Tibial artery (tissue), 4 donors: ENCODE measurements at regions of chr12 and their contacts with region 1.

Region 1: GRCh38 chr12:48795480-48796455 is 6.9 kb upstream of the ADCY6 start:
- DNase-seq: peak; percentile 80 to 83
- H3K4me3 ChIP-seq: no peak overlapping the region
- H3K27ac ChIP-seq: no peak overlapping the region
- H3K4me1 ChIP-seq: peaks cover 0 to 7% (median 2%) of the 10 kb centered on the region in 4 donors
- H3K27me3 ChIP-seq: peaks cover 0 to 8% of the 10 kb centered on the region in 2 donors
- CTCF ChIP-seq: peak; percentile 91 to 98

Region 2: GRCh38 chr12:48631057-48631456 is 164.7 kb before region 1 on chr12:
- intact Hi-C with region 1: no loop called
- DNase-seq: no peak
- H3K4me3 ChIP-seq: no peak overlapping the region
- H3K27ac ChIP-seq: no peak overlapping the region
- H3K4me1 ChIP-seq: no peaks in the 10 kb centered on the region
- H3K27me3 ChIP-seq: peaks cover 0 to 6% of the 10 kb centered on the region in 2 donors
- CTCF ChIP-seq: no peak

Region 3: DNA sequence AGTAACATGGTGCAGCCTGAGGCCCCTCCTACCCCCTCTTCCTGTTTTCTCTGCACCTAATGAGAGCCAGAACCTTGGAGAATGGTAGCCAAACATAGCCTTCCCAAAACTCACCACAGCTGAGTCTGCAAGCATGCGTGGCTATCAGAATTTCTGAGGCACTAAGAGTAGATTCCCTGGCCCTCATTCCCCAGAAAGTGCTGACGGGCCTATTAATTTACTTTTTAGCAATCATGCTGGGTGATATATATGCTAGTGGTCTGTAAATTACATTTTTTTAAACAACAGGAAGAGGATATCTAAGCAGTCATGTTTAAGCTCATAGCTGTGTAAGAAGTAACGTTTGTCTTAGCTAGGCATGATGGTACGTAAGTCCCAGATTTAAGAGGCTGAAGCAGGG is 144.1 kb before region 1 on chr12:
- intact Hi-C with region 1: no loop called
- DNase-seq: no peak
- H3K4me3 ChIP-seq: no peak overlapping the region
- H3K27ac ChIP-seq: no peak overlapping the region
- H3K4me1 ChIP-seq: no peaks in the 10 kb centered on the region
- H3K27me3 ChIP-seq: no peaks in the 10 kb centered on the region
- CTCF ChIP-seq: no peak

Region 4: DNA sequence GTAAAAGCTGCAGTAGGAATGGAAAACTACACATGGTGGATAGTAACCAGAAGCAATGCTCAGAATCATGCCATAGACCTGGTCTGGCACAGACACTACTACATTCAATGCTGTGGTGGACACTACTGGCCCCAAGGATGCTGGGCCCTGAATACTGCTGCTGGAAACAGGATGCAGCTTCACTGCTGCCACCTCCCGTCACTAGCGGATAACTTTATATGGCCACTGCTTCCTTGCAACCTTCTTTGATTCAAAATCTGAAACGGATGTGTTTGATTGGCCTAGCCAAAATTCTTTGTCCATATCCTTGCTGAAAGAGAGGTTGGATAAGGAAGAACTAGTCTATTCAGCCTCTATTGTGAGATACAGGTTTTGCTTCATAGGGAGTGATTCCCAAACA is 37.5 kb before region 1 on chr12:
- intact Hi-C with region 1: loop called (anchors 2 kb)
- DNase-seq: no peak
- H3K4me3 ChIP-seq: no peak overlapping the region
- H3K27ac ChIP-seq: no peak overlapping the region
- H3K4me1 ChIP-seq: peaks cover 0 to 5% (median 0%) of the 10 kb centered on the region in 4 donors
- H3K27me3 ChIP-seq: no peaks in the 10 kb centered on the region
- CTCF ChIP-seq: no peak